ENCODE measurements at regions of chr1 and their contacts with region 1.

Region 1: GRCh38 chr1:16366722-16367257 is at the start of gene SZRD1:
- DNase-seq: peak; percentile 92
- H3K4me3 ChIP-seq: peak within 1 kb of the TSS; percentile 59
- H3K27ac ChIP-seq: peak within 1 kb of the TSS; percentile 74
- H3K4me1 ChIP-seq: 0 out of 2 replicates have a peak, but pooled peaks cover 7% of the 10 kb centered on the region
- H3K27me3 ChIP-seq: no peaks in the 10 kb centered on the region
- CTCF ChIP-seq: no peak
- total RNA-seq, gene SZRD1: 104 and 114 TPM in 2 replicates

Region 2: GRCh38 chr1:16078925-16079656 is 287.7 kb before region 1 on chr1:
- CTCF ChIA-PET with region 1: interaction called, 10 read pairs
- POLR2A ChIA-PET with region 1: no interaction called
- intact Hi-C with region 1: loop called (anchors 1 kb)
- DNase-seq: peak; percentile 67 to 82
- H3K4me3 ChIP-seq: no peak overlapping the region
- H3K27ac ChIP-seq: peak overlapping the region; percentile 20; the same call in 1 of the 2 replicates
- H3K4me1 ChIP-seq: peaks cover 63% of the 10 kb centered on the region
- H3K27me3 ChIP-seq: no peaks in the 10 kb centered on the region
- CTCF ChIP-seq: peak; percentile 92

Region 3: GRCh38 chr1:16243936-16244649 is 122.7 kb before region 1 on chr1:
- CTCF ChIA-PET with region 1: interaction called, 3 read pairs
- POLR2A ChIA-PET with region 1: no interaction called
- intact Hi-C with region 1: loop called (anchors 5 kb)
- DNase-seq: peak; percentile 60 to 73
- H3K4me3 ChIP-seq: no peak overlapping the region
- H3K27ac ChIP-seq: no peak overlapping the region
- H3K4me1 ChIP-seq: peaks cover 15% of the 10 kb centered on the region
- H3K27me3 ChIP-seq: no peaks in the 10 kb centered on the region
- CTCF ChIP-seq: peak; percentile 81

Region 4: GRCh38 chr1:16266411-16267118 is 100.2 kb before region 1 on chr1:
- CTCF ChIA-PET with region 1: interaction called, 6 read pairs
- POLR2A ChIA-PET with region 1: interaction called, 39 read pairs
- intact Hi-C with region 1: no loop called
- DNase-seq: no peak
- H3K4me3 ChIP-seq: no peak overlapping the region
- H3K27ac ChIP-seq: no peak overlapping the region
- H3K4me1 ChIP-seq: no peaks in the 10 kb centered on the region
- H3K27me3 ChIP-seq: no peaks in the 10 kb centered on the region
- CTCF ChIP-seq: no peak

Region 5: GRCh38 chr1:16409536-16410152 is 42.9 kb after region 1 on chr1:
- CTCF ChIA-PET with region 1: no interaction called
- POLR2A ChIA-PET with region 1: no interaction called
- intact Hi-C with region 1: no loop called
- DNase-seq: no peak
- H3K4me3 ChIP-seq: no peak overlapping the region
- H3K27ac ChIP-seq: no peak overlapping the region
- H3K4me1 ChIP-seq: no peaks in the 10 kb centered on the region
- H3K27me3 ChIP-seq: no peaks in the 10 kb centered on the region
- CTCF ChIP-seq: no peak

Region 6: GRCh38 chr1:16420424-16421118 is 53.8 kb after region 1 on chr1:
- CTCF ChIA-PET with region 1: no interaction called
- POLR2A ChIA-PET with region 1: no interaction called
- intact Hi-C with region 1: no loop called
- DNase-seq: no peak
- H3K4me3 ChIP-seq: no peak overlapping the region
- H3K27ac ChIP-seq: no peak overlapping the region
- H3K4me1 ChIP-seq: no peaks in the 10 kb centered on the region
- H3K27me3 ChIP-seq: no peaks in the 10 kb centered on the region
- CTCF ChIP-seq: no peak

Region 7: DNA sequence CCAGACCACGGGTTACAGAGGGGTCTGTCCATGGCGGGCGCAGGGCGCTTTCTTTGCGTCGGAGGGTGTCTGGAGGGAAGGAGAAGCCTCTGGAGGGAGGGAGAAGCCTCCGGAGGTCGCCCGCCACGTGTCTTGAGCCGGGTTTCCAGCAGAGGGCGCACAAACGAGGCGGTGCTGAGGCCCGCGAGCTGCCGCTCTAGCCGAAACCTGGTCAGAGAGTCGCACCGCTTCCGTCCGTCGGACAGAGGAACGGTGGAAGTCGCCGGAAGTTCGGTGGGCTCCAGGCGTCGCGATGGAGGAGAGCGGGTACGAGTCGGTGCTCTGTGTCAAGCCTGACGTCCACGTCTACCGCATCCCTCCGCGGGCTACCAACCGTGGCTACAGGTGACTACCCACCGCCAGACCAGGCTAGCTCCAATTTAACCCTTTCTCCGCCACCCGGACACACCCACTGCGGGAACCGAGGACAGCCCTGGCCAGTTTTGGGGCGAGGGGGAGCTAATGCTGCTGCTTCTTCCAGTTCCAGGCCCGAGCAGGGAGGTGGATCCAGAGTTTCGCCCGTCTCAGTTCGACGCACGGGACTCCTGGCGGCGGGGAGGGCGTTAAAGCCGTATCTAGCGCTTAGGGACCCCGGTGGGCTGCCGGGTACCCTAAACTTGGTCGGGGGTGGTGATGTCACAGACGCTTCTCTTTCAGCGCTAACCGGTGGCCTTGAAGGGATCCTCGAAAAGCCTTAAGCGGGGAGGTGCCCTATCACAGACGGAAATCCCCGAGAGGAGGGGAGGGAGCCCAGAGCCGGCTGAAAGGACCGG is 73.9 kb after region 1 on chr1 and contains the start of gene NECAP2:
- CTCF ChIA-PET with region 1: interaction called, 3 read pairs
- POLR2A ChIA-PET with region 1: interaction called, 5 read pairs
- intact Hi-C with region 1: loop called (anchors 5 kb)
- DNase-seq: peak; percentile 71 to 93
- H3K4me3 ChIP-seq: peak within 1 kb of the TSS; percentile 74
- H3K27ac ChIP-seq: peak within 1 kb of the TSS; percentile 14; the same call in 1 of the 2 replicates
- H3K4me1 ChIP-seq: peaks cover 5% of the 10 kb centered on the region; the same call in 1 of the 2 replicates
- H3K27me3 ChIP-seq: no peaks in the 10 kb centered on the region
- CTCF ChIP-seq: peak; percentile 71
- total RNA-seq, gene NECAP2: 49.6 and 52.4 TPM in 2 replicates